Heart right ventricle (tissue), 16 donors: ENCODE measurements at regions of chr6 and their contacts with region 1.

Region 1: DNA sequence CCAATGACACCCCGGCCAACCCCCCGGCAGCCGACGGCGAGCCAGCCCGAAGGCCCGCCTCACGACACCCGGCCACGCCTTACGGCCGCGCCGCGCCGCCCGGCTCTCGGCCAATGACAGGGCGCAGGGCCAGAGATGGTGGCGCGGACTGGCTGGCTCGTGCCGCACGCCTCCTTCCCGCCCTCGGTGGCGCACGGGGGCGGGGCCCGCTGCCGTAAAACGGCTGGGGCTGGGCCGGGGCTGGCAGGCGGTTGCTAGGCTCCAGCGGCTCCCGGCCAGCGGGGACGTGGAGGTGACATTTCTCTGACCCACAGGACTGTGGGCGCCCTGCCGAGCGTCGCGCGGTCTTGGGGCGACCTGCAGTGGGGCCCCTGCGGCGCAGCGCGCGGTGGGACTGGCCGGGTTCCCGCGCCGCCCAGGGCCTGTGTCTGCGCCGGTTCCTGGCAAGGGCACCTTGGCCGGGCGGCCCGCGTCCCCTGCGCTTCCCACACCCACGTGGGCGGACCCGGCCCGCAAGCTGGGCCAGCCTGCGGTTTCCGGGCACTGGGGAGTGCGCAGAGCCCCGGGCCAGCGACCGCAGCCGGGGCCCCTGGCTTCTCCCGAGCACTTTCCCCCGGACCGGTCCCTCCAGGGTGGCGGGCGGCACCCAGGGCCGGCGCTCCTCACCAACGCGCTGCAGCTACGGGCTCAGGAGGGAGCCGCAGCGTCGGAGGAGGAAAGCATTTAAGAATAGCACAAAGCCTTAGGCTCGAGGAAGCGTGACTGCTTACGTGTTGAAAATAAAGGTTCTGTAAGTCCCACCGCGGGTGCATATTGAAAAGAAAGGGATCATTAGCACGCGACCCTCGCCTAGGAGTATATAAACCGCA is at the start of gene MPC1:
- DNase-seq: peak; percentile 96 to 97
- ATAC-seq: peak; percentile 96 to 98 (median 96)
- H3K4me3 ChIP-seq: peak within 1 kb of the TSS; percentile 69 to 97 (median 91)
- H3K27ac ChIP-seq: peak within 1 kb of the TSS; percentile 91 to 98 (median 96)
- H3K4me1 ChIP-seq: peaks cover 3 to 40% (median 25%) of the 10 kb centered on the region in 9 donors
- H3K27me3 ChIP-seq: no peaks in the 10 kb centered on the region
- CTCF ChIP-seq: no peak
- total RNA-seq, gene MPC1: 276 to 736 (median 588) TPM

Region 2: DNA sequence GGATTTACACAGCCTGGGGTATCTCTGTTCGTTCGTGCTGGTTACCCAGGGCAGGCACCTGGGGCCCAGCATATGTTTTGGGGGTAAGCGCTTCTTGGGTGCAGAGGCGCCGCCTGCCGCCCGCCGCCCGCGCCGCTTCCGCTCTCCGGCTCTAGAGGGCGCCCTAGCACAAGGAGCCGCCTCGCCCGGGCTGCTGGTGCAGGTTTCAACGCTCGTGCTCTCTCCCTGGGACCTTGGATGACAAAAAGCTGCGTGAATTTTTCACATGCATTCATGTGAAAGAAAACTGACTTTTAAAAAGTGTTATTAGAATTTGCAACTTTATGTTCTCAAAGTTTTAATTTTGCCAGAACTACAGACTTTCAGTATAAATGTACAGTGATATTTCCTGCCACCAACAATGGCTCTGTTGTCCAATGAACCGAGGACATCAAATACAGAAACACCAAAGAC is 107.4 kb before region 1 on chr6:
- intact Hi-C with region 1: loop called in 1 of 10 experiments (anchors 5 kb)
- DNase-seq: peak; percentile 32 to 75
- ATAC-seq: peak; percentile 72 to 86 (median 80)
- H3K4me3 ChIP-seq: no peak overlapping the region
- H3K27ac ChIP-seq: no peak overlapping the region
- H3K4me1 ChIP-seq: peaks cover 0 to 6% (median 0%) of the 10 kb centered on the region in 9 donors
- H3K27me3 ChIP-seq: peaks cover 0 to 24% (median 12%) of the 10 kb centered on the region in 7 donors
- CTCF ChIP-seq: peak in 8 of 9 donors; percentile 94 to 100 (median 98)

Region 3: DNA sequence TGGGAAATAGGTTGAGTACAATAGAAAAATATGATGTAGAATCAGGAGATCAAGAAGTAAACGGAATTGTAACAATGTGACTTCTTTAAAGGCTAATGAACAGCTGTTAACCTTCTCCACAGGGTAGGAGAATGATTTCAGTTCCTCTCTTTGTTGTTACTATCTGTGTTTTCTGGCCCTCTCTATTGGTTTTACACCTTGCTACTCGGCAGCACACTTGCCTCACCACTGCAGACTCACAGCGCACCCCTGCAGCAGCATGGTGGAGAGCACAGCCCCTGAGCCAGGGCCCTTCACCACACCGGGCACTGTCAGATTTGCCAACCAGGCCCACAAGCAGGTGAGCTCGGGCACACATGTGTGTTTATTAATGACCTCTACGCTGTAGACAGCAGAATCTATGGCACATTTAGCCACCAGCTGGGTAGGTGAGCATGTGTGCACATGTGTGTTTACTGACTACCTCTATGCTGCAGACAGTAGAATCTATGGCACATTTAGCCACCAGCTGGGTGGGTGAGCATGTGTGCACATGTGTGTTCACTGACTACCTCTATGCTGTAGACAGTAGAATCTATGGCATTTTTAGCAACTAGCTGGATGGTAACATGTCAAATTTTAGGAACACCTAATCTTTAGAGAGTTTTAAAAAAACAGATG is 57.7 kb before region 1 on chr6:
- intact Hi-C with region 1: loop called in 1 of 10 experiments (anchors 5 kb)
- DNase-seq: no peak
- ATAC-seq: no peak
- H3K4me3 ChIP-seq: no peak overlapping the region
- H3K27ac ChIP-seq: no peak overlapping the region
- H3K4me1 ChIP-seq: peaks cover 0 to 8% (median 6%) of the 10 kb centered on the region in 9 donors
- H3K27me3 ChIP-seq: no peaks in the 10 kb centered on the region
- CTCF ChIP-seq: no peak

Region 4: DNA sequence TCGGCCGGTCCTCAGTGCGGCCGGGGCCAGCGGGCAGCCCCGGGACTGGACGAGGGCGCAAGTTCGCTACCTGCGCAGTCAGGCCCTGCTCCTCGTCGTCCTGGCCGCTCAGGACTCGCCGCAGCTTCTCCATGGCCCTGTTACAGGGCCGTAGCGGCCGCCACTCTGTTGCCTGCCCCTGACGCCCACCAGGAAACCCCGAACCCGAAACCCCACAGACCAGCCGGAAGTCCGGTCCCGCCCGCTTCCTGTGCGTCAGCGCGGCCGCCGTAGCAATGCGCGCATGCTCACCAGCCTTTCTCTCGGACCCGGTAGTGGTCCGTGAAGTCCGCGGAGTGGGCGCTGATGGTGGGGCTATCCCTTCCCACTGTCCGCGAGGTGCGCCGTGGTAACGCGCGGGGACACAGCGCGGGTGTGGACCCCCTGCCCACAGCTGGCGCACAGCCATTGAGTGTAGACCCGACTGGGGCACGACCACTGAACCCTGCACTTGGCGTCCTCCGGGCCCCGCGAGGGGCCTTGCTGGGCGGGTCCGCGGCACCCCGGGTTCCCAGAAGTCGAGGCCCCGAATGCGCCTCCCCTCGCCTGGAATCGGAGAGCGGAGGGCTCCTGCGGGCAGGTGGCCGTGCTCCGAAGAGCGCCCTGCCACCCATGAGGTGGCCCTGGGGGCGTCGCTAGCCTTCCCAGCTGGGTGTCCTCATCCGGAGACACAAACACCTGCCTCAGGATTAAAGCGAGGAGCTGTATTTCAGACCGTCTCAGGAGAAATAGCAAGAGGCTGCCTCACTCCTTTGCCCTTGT is 40.6 kb before region 1 on chr6 and contains the start of gene SFT2D1:
- intact Hi-C with region 1: loop called in 7 of 10 experiments (anchors 2 to 5 kb)
- DNase-seq: peak; percentile 89 to 92
- ATAC-seq: peak; percentile 97 to 99 (median 98)
- H3K4me3 ChIP-seq: peak within 1 kb of the TSS; percentile 90 to 99 (median 94)
- H3K27ac ChIP-seq: peak within 1 kb of the TSS; percentile 75 to 99 (median 95)
- H3K4me1 ChIP-seq: peaks cover 11 to 54% (median 34%) of the 10 kb centered on the region in 9 donors
- H3K27me3 ChIP-seq: no peaks in the 10 kb centered on the region
- CTCF ChIP-seq: no peak
- total RNA-seq, gene SFT2D1: 15.6 to 28.1 (median 21.4) TPM

Region 5: GRCh38 chr6:166411721-166412151 is 28.6 kb after region 1 on chr6:
- intact Hi-C with region 1: no loop called
- DNase-seq: no peak
- ATAC-seq: no peak
- H3K4me3 ChIP-seq: no peak overlapping the region
- H3K27ac ChIP-seq: peak overlapping the region in 1 of 10 donors; percentile 44
- H3K4me1 ChIP-seq: no peaks in the 10 kb centered on the region
- H3K27me3 ChIP-seq: no peaks in the 10 kb centered on the region
- CTCF ChIP-seq: no peak

Region 6: DNA sequence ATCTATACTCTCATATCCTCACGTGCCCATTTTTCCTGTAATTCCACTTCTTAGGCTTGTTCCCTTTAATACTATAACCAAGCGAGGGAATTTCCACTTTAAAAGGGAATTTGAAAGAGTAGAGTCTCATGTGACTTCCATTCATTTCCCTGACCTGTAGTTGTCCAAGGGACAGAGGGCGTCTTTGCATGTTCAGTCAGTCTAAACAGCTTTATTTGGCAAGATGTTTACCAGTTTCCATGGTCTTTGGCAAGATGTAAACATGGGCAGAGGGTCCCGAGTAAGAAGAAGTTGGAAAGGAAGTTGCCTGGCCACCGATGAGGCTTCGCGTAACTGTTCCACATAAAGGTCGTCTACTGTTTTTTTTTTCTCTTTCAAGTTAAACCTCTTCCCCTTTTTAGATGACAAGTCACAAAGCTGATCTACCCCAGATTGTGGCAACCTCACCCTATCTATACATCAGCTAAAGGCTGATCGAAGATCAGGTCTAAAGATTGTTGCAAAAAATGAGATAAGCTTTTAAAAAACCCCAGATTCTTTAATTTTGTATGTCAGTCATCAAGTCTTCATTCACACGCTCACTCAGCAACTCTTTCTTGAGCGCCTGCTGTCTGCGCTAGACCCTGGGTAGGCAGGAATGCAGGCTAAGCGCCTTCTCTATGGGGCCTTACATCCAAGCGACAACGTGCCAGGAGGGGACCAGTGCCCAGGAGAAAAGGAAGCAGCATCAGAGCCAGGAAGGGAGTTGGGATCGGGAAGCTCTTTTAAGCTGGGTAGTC is 708.0 kb after region 1 on chr6:
- intact Hi-C with region 1: no loop called
- DNase-seq: no peak
- ATAC-seq: peak in 4 of 8 donors; percentile 21 to 39 (median 36)
- H3K4me3 ChIP-seq: no peak overlapping the region
- H3K27ac ChIP-seq: peak overlapping the region in 1 of 10 donors; percentile 81
- H3K4me1 ChIP-seq: peaks cover 0 to 62% (median 7%) of the 10 kb centered on the region in 9 donors
- H3K27me3 ChIP-seq: peaks cover 0 to 8% (median 0%) of the 10 kb centered on the region in 7 donors
- CTCF ChIP-seq: no peak